MCF 10A (cell line): ENCODE measurements at regions of chr22 and their contacts with region 1.

Region 1: GRCh38 chr22:31637938-31638618 is 23.9 kb downstream of the PISD start:
- DNase-seq: no peak
- H3K4me3 Mint-ChIP-seq: no peak overlapping the region
- H3K27ac Mint-ChIP-seq: peak overlapping the region; percentile 51
- H3K4me1 Mint-ChIP-seq: peaks cover 22% of the 10 kb centered on the region
- H3K27me3 Mint-ChIP-seq: no peaks in the 10 kb centered on the region
- CTCF ChIP-seq: no peak

Region 2: GRCh38 chr22:31442768-31443489 is 195.1 kb before region 1 on chr22:
- CTCF ChIA-PET with region 1: no interaction called
- POLR2A ChIA-PET with region 1: no interaction called
- intact Hi-C with region 1: no loop called
- DNase-seq: no peak
- H3K4me3 Mint-ChIP-seq: no peak overlapping the region
- H3K27ac Mint-ChIP-seq: peak overlapping the region; percentile 25
- H3K4me1 Mint-ChIP-seq: no peaks in the 10 kb centered on the region
- H3K27me3 Mint-ChIP-seq: no peaks in the 10 kb centered on the region
- CTCF ChIP-seq: no peak

Region 3: DNA sequence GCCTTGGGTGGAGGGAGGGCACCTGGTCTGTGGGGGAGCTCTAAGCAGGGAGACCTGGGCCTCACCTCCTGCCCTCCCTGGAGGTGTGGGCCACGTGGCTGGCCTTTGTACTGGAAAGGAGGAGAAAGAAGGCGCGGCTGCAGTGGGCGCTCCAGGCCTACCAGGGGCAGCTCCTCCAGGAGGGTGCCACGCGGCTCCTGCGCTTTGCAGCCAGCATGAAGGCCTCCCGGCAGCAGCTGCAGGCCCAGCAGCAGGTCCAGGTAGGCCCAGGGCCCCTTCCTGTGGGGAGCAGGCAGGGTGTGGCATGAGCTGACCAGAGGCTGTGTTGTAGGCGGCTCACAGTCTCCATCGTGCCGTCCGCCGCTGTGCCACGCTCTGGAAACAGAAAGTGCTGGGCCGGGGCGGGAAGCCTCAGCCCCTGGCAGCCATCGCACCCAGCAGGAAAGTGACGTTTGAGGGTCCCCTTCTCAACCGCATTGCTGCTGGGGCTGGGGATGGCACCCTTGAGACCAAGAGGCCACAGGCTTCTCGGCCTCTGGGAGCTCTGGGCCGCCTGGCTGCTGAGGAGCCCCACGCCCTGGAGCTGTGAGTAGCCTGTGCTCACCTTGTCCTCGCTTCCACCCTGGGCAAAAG is 24.7 kb before region 1 on chr22:
- CTCF ChIA-PET with region 1: interaction called, 11 read pairs
- POLR2A ChIA-PET with region 1: no interaction called
- intact Hi-C with region 1: no loop called
- DNase-seq: no peak
- H3K4me3 Mint-ChIP-seq: no peak overlapping the region
- H3K27ac Mint-ChIP-seq: peak overlapping the region; percentile 33
- H3K4me1 Mint-ChIP-seq: no peaks in the 10 kb centered on the region
- H3K27me3 Mint-ChIP-seq: no peaks in the 10 kb centered on the region
- CTCF ChIP-seq: no peak